AG04449 (cell line): ENCODE measurements at regions of chr9 and their contacts with region 1.

Region 1: DNA sequence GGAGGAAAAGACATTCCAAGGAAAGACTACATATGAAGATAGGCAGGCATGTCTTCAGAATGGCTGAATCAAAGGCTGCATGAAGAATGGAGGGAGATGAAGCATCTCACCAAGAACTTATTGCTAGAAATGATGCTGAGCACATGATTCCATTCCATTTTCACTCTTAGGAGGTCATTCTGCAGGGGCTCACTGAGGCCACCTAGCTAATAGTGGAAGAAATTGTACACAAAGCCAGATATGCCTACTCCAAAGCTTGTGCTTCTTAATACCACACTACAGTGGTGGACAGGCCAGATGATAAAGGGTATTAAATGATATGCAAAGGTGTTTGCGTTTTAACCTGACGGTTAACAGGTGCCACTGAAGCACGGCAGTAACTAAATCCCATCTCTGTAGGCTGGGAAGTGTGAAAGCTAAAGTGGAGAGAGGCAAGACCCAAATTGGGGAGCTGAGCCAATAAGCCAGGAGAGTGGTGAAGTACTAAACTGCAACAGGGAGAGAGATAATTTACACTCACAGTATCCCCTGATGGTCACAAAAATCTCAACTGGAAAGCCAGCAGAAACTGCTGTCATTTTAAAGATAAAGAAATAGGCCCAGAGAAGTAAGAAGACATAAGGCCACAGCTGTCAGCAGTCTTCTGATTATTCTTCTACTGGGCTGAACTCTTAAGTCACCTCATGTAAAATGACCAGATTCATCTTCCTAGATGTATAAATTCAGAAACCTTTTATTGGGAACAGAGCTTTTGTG is 14.6 kb downstream of the NDUFA8 start:
- DNase-seq: no peak
- H3K4me3 ChIP-seq: no peak overlapping the region
- CTCF ChIP-seq: peak; percentile 37

Region 2: DNA sequence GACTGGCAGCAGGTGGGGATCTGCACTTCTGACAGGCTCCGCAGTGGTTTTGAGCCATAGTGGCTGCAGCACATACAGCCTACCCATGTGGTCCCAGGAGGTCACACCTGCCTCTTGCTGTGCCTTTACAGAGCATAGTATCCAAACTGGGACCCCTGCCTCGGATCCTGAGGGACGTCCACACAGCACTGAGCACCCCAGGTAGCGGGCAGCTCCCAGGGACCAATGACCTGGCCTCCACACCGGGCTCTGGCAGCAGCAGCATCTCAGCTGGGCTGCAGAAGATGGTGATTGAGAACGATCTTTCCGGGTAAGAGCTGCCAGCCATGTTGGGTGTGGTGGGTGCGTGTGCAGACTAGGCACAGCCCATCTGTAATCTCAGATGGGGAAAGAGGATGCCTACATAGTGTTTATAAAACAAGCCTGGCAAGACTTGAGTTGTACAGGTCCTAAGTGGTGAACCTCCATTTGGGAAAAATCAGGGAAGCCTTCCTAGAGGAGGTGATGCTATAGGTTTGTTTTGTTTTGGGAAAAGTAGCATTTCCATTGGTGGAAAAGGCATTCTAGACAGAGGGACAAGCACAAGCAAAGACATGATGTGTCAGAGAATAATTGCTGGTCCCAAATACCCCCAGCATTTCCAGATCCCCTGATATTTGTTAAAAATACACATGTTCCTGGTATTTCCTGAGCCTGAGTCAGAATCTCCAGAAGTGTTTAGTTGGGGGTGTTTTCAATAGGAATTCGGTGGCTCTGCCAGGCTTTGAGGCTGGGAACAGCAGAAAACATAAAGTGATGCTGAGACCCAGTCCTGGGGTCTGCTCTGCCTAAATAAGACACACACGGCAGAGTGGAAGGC is 374.4 kb before region 1 on chr9:
- CTCF ChIA-PET with region 1: no interaction called
- POLR2A ChIA-PET with region 1: no interaction called
- DNase-seq: peak; percentile 46
- H3K4me3 ChIP-seq: no peak overlapping the region
- CTCF ChIP-seq: no peak

Region 3: GRCh38 chr9:122107291-122107805 is 37.7 kb before region 1 on chr9:
- CTCF ChIA-PET with region 1: no interaction called
- POLR2A ChIA-PET with region 1: no interaction called
- DNase-seq: no peak
- H3K4me3 ChIP-seq: no peak overlapping the region
- CTCF ChIP-seq: no peak

Region 4: GRCh38 chr9:122159026-122159924 is 14.3 kb after region 1 on chr9 and contains the starts of genes MORN5 and NDUFA8:
- CTCF ChIA-PET with region 1: interaction called, 66 read pairs
- POLR2A ChIA-PET with region 1: no interaction called
- DNase-seq: peak; percentile 57
- H3K4me3 ChIP-seq: peak within 1 kb of the TSS; percentile 99
- CTCF ChIP-seq: no peak